ENCODE measurements at regions of chr20 and their contacts with region 1.

Region 1: DNA sequence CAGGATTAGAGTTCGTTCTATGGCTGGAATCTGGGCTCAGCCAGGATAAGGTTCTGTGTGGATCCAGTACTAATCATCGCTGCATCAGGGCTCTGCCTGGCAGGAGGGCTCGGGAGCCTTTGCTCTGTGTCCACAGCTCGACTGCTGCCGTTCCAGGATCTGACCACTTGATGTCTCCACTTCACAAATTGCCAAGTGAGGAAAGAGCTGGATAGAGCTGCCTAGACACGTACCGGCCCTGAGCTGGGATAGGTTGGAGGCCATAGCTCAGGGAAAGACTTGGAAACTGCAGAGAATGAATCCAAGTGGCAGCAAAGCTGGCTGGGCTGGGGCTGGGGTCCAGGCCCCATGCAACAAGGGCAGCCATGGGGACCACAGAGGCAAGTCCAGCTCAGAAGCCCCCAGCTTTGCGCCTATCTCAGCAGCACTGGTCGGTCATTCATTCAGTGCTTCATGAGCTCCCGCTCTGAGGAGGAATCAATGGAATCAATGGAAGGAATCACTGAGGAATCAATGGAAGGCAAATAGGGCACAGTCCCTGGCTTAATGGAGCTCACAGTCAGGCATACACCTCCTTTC is 38.0 kb upstream of the TOP1 start:
- DNase-seq: peak; percentile 35 to 77 (median 65)
- ATAC-seq: peak; percentile 81
- H3K4me3 ChIP-seq: no peak overlapping the region
- H3K4me3 Mint-ChIP-seq: no peak overlapping the region
- H3K27ac ChIP-seq: no peak overlapping the region
- H3K27ac Mint-ChIP-seq: no peak overlapping the region
- H3K4me1 ChIP-seq: peaks cover 30% of the 10 kb centered on the region
- H3K4me1 Mint-ChIP-seq: peaks cover 36% of the 10 kb centered on the region
- H3K27me3 ChIP-seq: no peaks in the 10 kb centered on the region
- H3K27me3 Mint-ChIP-seq: no peaks in the 10 kb centered on the region
- CTCF ChIP-seq: peak; percentile 74

Region 2: GRCh38 chr20:40883097-40883496 is 107.5 kb before region 1 on chr20:
- CTCF ChIA-PET with region 1: no interaction called
- POLR2A ChIA-PET with region 1: no interaction called
- intact Hi-C with region 1: no loop called
- DNase-seq: no peak
- ATAC-seq: no peak
- H3K4me3 ChIP-seq: no peak overlapping the region
- H3K4me3 Mint-ChIP-seq: no peak overlapping the region
- H3K27ac ChIP-seq: no peak overlapping the region
- H3K27ac Mint-ChIP-seq: no peak overlapping the region
- H3K4me1 ChIP-seq: peaks cover 24% of the 10 kb centered on the region
- H3K4me1 Mint-ChIP-seq: peaks cover 27% of the 10 kb centered on the region
- H3K27me3 ChIP-seq: no peaks in the 10 kb centered on the region
- H3K27me3 Mint-ChIP-seq: no peaks in the 10 kb centered on the region
- CTCF ChIP-seq: no peak

Region 3: DNA sequence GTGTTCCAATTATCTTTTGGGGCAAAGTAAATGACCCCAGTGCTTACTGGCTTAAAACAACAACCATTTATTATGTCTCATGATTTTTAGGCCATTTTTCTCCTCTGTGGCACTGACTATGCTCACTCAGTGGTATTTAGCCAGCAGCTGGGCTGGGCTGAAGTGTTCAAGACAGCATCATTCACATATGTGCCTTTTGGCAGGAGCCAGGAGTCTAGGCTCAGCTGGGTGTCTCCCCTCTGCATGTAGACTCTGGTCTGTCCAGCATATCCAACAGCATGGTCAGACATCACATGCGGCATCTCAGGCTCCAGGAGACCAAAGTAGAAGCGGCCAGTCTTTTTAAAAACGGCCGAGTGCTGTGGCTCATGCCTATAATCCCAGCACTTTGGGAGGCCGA is 82.3 kb before region 1 on chr20:
- CTCF ChIA-PET with region 1: no interaction called
- POLR2A ChIA-PET with region 1: no interaction called
- intact Hi-C with region 1: no loop called
- DNase-seq: no peak
- ATAC-seq: no peak
- H3K4me3 ChIP-seq: no peak overlapping the region
- H3K4me3 Mint-ChIP-seq: no peak overlapping the region
- H3K27ac ChIP-seq: no peak overlapping the region
- H3K27ac Mint-ChIP-seq: no peak overlapping the region
- H3K4me1 ChIP-seq: no peaks in the 10 kb centered on the region
- H3K4me1 Mint-ChIP-seq: peaks cover 4% of the 10 kb centered on the region
- H3K27me3 ChIP-seq: no peaks in the 10 kb centered on the region
- H3K27me3 Mint-ChIP-seq: peaks cover 15% of the 10 kb centered on the region
- CTCF ChIP-seq: no peak

Region 4: GRCh38 chr20:40970201-40970600 is 20.4 kb before region 1 on chr20:
- CTCF ChIA-PET with region 1: interaction called, 21 read pairs
- POLR2A ChIA-PET with region 1: no interaction called
- intact Hi-C with region 1: loop called in 1 of 2 experiments (anchors 1 kb)
- DNase-seq: peak in 1 of 9 experiments; percentile 44
- ATAC-seq: no peak
- H3K4me3 ChIP-seq: no peak overlapping the region
- H3K4me3 Mint-ChIP-seq: no peak overlapping the region
- H3K27ac ChIP-seq: no peak overlapping the region
- H3K27ac Mint-ChIP-seq: no peak overlapping the region
- H3K4me1 ChIP-seq: no peaks in the 10 kb centered on the region
- H3K4me1 Mint-ChIP-seq: peaks cover 7% of the 10 kb centered on the region
- H3K27me3 ChIP-seq: no peaks in the 10 kb centered on the region
- H3K27me3 Mint-ChIP-seq: peaks cover 3% of the 10 kb centered on the region
- CTCF ChIP-seq: no peak

Region 5: GRCh38 chr20:41011551-41012067 is 21.0 kb after region 1 on chr20:
- CTCF ChIA-PET with region 1: interaction called, 15 read pairs
- POLR2A ChIA-PET with region 1: interaction called, 3 read pairs
- intact Hi-C with region 1: no loop called
- DNase-seq: peak in 1 of 9 experiments; percentile 41
- ATAC-seq: peak; percentile 40
- H3K4me3 ChIP-seq: no peak overlapping the region
- H3K4me3 Mint-ChIP-seq: no peak overlapping the region
- H3K27ac ChIP-seq: no peak overlapping the region
- H3K27ac Mint-ChIP-seq: no peak overlapping the region
- H3K4me1 ChIP-seq: peaks cover 28% of the 10 kb centered on the region
- H3K4me1 Mint-ChIP-seq: peaks cover 29% of the 10 kb centered on the region
- H3K27me3 ChIP-seq: no peaks in the 10 kb centered on the region
- H3K27me3 Mint-ChIP-seq: no peaks in the 10 kb centered on the region
- CTCF ChIP-seq: no peak

Region 6: DNA sequence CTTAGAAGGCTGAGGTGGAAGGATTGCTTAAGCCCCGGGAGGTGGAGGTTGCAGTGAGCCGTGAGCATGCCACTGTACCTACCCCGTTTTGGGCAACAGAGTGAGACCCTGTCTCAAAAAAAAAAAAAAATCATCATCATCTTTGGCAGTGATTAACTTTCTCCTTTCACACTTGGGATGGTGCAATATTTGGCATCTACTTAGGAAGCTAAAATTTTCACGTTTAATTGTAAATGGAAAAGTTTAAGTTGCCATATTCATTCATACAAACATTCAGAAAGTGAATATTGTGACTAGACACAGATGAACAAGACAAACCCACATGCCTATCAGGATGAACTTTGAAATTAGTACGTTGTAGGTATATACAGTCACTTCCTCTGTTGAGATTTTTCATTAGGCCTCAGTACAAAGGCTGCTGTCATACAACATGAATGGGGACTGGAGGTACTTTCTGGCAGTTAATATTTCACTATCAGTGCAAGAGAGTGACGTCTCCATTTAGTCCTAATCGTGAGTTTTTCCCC is 48.3 kb after region 1 on chr20:
- CTCF ChIA-PET with region 1: interaction called, 12 read pairs
- POLR2A ChIA-PET with region 1: no interaction called
- intact Hi-C with region 1: no loop called
- DNase-seq: no peak
- ATAC-seq: peak; percentile 47
- H3K4me3 ChIP-seq: no peak overlapping the region
- H3K4me3 Mint-ChIP-seq: no peak overlapping the region
- H3K27ac ChIP-seq: no peak overlapping the region
- H3K27ac Mint-ChIP-seq: no peak overlapping the region
- H3K4me1 ChIP-seq: peaks cover 65% of the 10 kb centered on the region
- H3K4me1 Mint-ChIP-seq: peaks cover 90% of the 10 kb centered on the region
- H3K27me3 ChIP-seq: no peaks in the 10 kb centered on the region
- H3K27me3 Mint-ChIP-seq: no peaks in the 10 kb centered on the region
- CTCF ChIP-seq: no peak

Region 7: GRCh38 chr20:41072190-41072863 is 81.7 kb after region 1 on chr20:
- CTCF ChIA-PET with region 1: interaction called, 22 read pairs
- POLR2A ChIA-PET with region 1: no interaction called
- intact Hi-C with region 1: loop called (anchors 5 kb)
- DNase-seq: no peak
- ATAC-seq: no peak
- H3K4me3 ChIP-seq: no peak overlapping the region
- H3K4me3 Mint-ChIP-seq: peak overlapping the region; percentile 5
- H3K27ac ChIP-seq: no peak overlapping the region
- H3K27ac Mint-ChIP-seq: peak overlapping the region; percentile 11
- H3K4me1 ChIP-seq: peaks cover 35% of the 10 kb centered on the region
- H3K4me1 Mint-ChIP-seq: peaks cover 86% of the 10 kb centered on the region
- H3K27me3 ChIP-seq: no peaks in the 10 kb centered on the region
- H3K27me3 Mint-ChIP-seq: no peaks in the 10 kb centered on the region
- CTCF ChIP-seq: no peak

Region 8: GRCh38 chr20:41086402-41087338 is 96.0 kb after region 1 on chr20:
- CTCF ChIA-PET with region 1: interaction called, 183 read pairs
- POLR2A ChIA-PET with region 1: no interaction called
- intact Hi-C with region 1: no loop called
- DNase-seq: peak in 1 of 9 experiments; percentile 16
- ATAC-seq: no peak
- H3K4me3 ChIP-seq: no peak overlapping the region
- H3K4me3 Mint-ChIP-seq: no peak overlapping the region
- H3K27ac ChIP-seq: peak overlapping the region in 1 of 2 experiments; percentile 23
- H3K27ac Mint-ChIP-seq: peak overlapping the region; percentile 16
- H3K4me1 ChIP-seq: peaks cover 7% of the 10 kb centered on the region
- H3K4me1 Mint-ChIP-seq: peaks cover 19% of the 10 kb centered on the region
- H3K27me3 ChIP-seq: no peaks in the 10 kb centered on the region
- H3K27me3 Mint-ChIP-seq: no peaks in the 10 kb centered on the region
- CTCF ChIP-seq: no peak

Measured in CD8-positive, alpha-beta T cell (primary cell).